ENCODE measurements at regions of chr17 and their contacts with region 1.

Region 1: GRCh38 chr17:45218895-45219661 is 2.6 kb upstream of the FMNL1 start:
- DNase-seq: peak; percentile 77 to 84 (median 82)
- H3K4me3 ChIP-seq: peak overlapping the region in 1 of 2 donors; percentile 13
- H3K4me3 Mint-ChIP-seq: peak overlapping the region; percentile 88 to 95 (median 92)
- H3K27ac ChIP-seq: peak overlapping the region; percentile 12
- H3K27ac Mint-ChIP-seq: peak overlapping the region; percentile 84 to 94 (median 91)
- H3K4me1 ChIP-seq: peaks cover 29% of the 10 kb centered on the region
- H3K4me1 Mint-ChIP-seq: peaks cover 21 to 49% (median 24%) of the 10 kb centered on the region in 4 donors
- H3K27me3 ChIP-seq: no peaks in the 10 kb centered on the region
- H3K27me3 Mint-ChIP-seq: no peaks in the 10 kb centered on the region

Region 2: GRCh38 chr17:45148183-45149036 is 70.7 kb before region 1 on chr17 and contains the start of gene HEXIM1:
- CTCF ChIA-PET with region 1: interaction called, 6 read pairs
- POLR2A ChIA-PET with region 1: interaction called, 173 read pairs
- intact Hi-C with region 1: no loop called
- DNase-seq: peak; percentile 99 to 100 (median 99)
- H3K4me3 ChIP-seq: peak within 1 kb of the TSS; percentile 90 to 95
- H3K4me3 Mint-ChIP-seq: peak within 1 kb of the TSS; percentile 93 to 99 (median 96)
- H3K27ac ChIP-seq: peak within 1 kb of the TSS; percentile 88
- H3K27ac Mint-ChIP-seq: peak within 1 kb of the TSS; percentile 98 to 100 (median 100)
- H3K4me1 ChIP-seq: peaks cover 59% of the 10 kb centered on the region
- H3K4me1 Mint-ChIP-seq: peaks cover 26 to 61% (median 44%) of the 10 kb centered on the region in 4 donors
- H3K27me3 ChIP-seq: no peaks in the 10 kb centered on the region
- H3K27me3 Mint-ChIP-seq: peaks cover 1 to 5% of the 10 kb centered on the region in 2 donors
- total RNA-seq, gene HEXIM1: 28.8 to 30.8 TPM

Region 3: GRCh38 chr17:45235416-45236281 is 16.6 kb after region 1 on chr17:
- CTCF ChIA-PET with region 1: interaction called, 449 read pairs
- POLR2A ChIA-PET with region 1: interaction called, 1,143 read pairs
- intact Hi-C with region 1: loop called (anchors 1 kb)
- DNase-seq: peak; percentile 72 to 78 (median 73)
- H3K4me3 ChIP-seq: no peak overlapping the region
- H3K4me3 Mint-ChIP-seq: peak overlapping the region in 3 of 8 donors; percentile 17 to 63 (median 29)
- H3K27ac ChIP-seq: peak overlapping the region; percentile 57
- H3K27ac Mint-ChIP-seq: peak overlapping the region; percentile 88 to 99 (median 93)
- H3K4me1 ChIP-seq: peaks cover 54% of the 10 kb centered on the region
- H3K4me1 Mint-ChIP-seq: peaks cover 38 to 70% (median 53%) of the 10 kb centered on the region in 4 donors
- H3K27me3 ChIP-seq: no peaks in the 10 kb centered on the region
- H3K27me3 Mint-ChIP-seq: no peaks in the 10 kb centered on the region

Region 4: GRCh38 chr17:45261577-45262515 is 42.8 kb after region 1 on chr17 and contains the start of gene SPATA32:
- CTCF ChIA-PET with region 1: interaction called, 20 read pairs
- POLR2A ChIA-PET with region 1: interaction called, 1,143 read pairs
- intact Hi-C with region 1: no loop called
- DNase-seq: peak; percentile 61 to 76 (median 66)
- H3K4me3 ChIP-seq: peak within 1 kb of the TSS in 1 of 2 donors; percentile 48
- H3K4me3 Mint-ChIP-seq: peak within 1 kb of the TSS; percentile 76 to 88 (median 82)
- H3K27ac ChIP-seq: peak within 1 kb of the TSS; percentile 55
- H3K27ac Mint-ChIP-seq: peak within 1 kb of the TSS; percentile 71 to 91 (median 84)
- H3K4me1 ChIP-seq: peaks cover 26% of the 10 kb centered on the region
- H3K4me1 Mint-ChIP-seq: peaks cover 14 to 42% (median 26%) of the 10 kb centered on the region in 4 donors
- H3K27me3 ChIP-seq: no peaks in the 10 kb centered on the region
- H3K27me3 Mint-ChIP-seq: no peaks in the 10 kb centered on the region
- total RNA-seq, gene SPATA32: 0.22 to 0.41 TPM

Region 5: GRCh38 chr17:45277216-45277849 is 58.3 kb after region 1 on chr17:
- CTCF ChIA-PET with region 1: interaction called, 96 read pairs
- POLR2A ChIA-PET with region 1: interaction called, 17 read pairs
- intact Hi-C with region 1: loop called (anchors 2 kb)
- DNase-seq: peak; percentile 83 to 91 (median 85)
- H3K4me3 ChIP-seq: no peak overlapping the region
- H3K4me3 Mint-ChIP-seq: no peak overlapping the region
- H3K27ac ChIP-seq: no peak overlapping the region
- H3K27ac Mint-ChIP-seq: peak overlapping the region in 6 of 7 donors; percentile 15 to 86 (median 48)
- H3K4me1 ChIP-seq: peaks cover 6% of the 10 kb centered on the region
- H3K4me1 Mint-ChIP-seq: peaks cover 8 to 11% (median 10%) of the 10 kb centered on the region in 4 donors
- H3K27me3 ChIP-seq: no peaks in the 10 kb centered on the region
- H3K27me3 Mint-ChIP-seq: no peaks in the 10 kb centered on the region

Region 6: GRCh38 chr17:45307290-45308015 is 88.4 kb after region 1 on chr17:
- CTCF ChIA-PET with region 1: interaction called, 23 read pairs
- POLR2A ChIA-PET with region 1: interaction called, 324 read pairs
- intact Hi-C with region 1: no loop called
- DNase-seq: peak in 3 of 5 donors; percentile 29 to 69 (median 35)
- H3K4me3 ChIP-seq: no peak overlapping the region
- H3K4me3 Mint-ChIP-seq: peak overlapping the region in 7 of 8 donors; percentile 21 to 68 (median 57)
- H3K27ac ChIP-seq: peak overlapping the region; percentile 43
- H3K27ac Mint-ChIP-seq: peak overlapping the region; percentile 66 to 91 (median 86)
- H3K4me1 ChIP-seq: peaks cover 94% of the 10 kb centered on the region
- H3K4me1 Mint-ChIP-seq: peaks cover 58 to 91% (median 73%) of the 10 kb centered on the region in 4 donors
- H3K27me3 ChIP-seq: no peaks in the 10 kb centered on the region
- H3K27me3 Mint-ChIP-seq: no peaks in the 10 kb centered on the region

Measured in CD4-positive, alpha-beta memory T cell (primary cell).